PC-3 (cell line): ENCODE measurements at regions of chr10 and their contacts with region 1.

Region 1: GRCh38 chr10:36506261-36506660 is 619.1 kb upstream of the ANKRD30A start:
- DNase-seq: no peak
- ATAC-seq: no peak
- H3K4me3 ChIP-seq: no peak overlapping the region
- H3K27ac ChIP-seq: no peak overlapping the region
- H3K4me1 ChIP-seq: no peaks in the 10 kb centered on the region
- H3K27me3 ChIP-seq: no peaks in the 10 kb centered on the region
- CTCF ChIP-seq: no peak

Region 2: GRCh38 chr10:35438718-35439571 is 1067.3 kb before region 1 on chr10:
- CTCF ChIA-PET with region 1: no interaction called
- POLR2A ChIA-PET with region 1: interaction called, 21 read pairs
- intact Hi-C with region 1: no loop called
- DNase-seq: no peak
- ATAC-seq: no peak
- H3K4me3 ChIP-seq: no peak overlapping the region
- H3K27ac ChIP-seq: no peak overlapping the region
- H3K4me1 ChIP-seq: no peaks in the 10 kb centered on the region
- H3K27me3 ChIP-seq: no peaks in the 10 kb centered on the region
- CTCF ChIP-seq: no peak

Region 3: DNA sequence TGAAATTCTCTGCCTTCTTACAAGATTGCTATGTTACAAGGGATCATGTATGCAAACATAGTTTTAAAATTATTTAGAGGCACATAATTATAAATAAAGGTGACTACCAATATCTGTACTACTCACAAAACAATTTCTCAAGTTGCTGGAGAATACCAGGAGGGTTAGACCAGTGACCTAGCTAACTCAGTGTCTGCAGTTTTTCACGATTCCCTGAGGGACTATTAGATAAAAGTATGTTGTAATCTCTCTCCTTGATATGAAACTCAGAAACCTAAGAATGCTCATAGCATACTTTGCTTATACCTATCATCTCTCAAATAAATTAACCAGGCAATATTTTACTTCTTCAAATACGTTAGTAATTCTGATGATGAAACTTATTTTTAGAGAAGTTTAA is 85.2 kb after region 1 on chr10:
- CTCF ChIA-PET with region 1: no interaction called
- POLR2A ChIA-PET with region 1: no interaction called
- intact Hi-C with region 1: no loop called
- DNase-seq: no peak
- ATAC-seq: no peak
- H3K4me3 ChIP-seq: no peak overlapping the region
- H3K27ac ChIP-seq: no peak overlapping the region
- H3K4me1 ChIP-seq: no peaks in the 10 kb centered on the region
- H3K27me3 ChIP-seq: no peaks in the 10 kb centered on the region
- CTCF ChIP-seq: no peak